MCF 10A (cell line): ENCODE measurements at regions of chr1 and their contacts with region 1.

Region 1: DNA sequence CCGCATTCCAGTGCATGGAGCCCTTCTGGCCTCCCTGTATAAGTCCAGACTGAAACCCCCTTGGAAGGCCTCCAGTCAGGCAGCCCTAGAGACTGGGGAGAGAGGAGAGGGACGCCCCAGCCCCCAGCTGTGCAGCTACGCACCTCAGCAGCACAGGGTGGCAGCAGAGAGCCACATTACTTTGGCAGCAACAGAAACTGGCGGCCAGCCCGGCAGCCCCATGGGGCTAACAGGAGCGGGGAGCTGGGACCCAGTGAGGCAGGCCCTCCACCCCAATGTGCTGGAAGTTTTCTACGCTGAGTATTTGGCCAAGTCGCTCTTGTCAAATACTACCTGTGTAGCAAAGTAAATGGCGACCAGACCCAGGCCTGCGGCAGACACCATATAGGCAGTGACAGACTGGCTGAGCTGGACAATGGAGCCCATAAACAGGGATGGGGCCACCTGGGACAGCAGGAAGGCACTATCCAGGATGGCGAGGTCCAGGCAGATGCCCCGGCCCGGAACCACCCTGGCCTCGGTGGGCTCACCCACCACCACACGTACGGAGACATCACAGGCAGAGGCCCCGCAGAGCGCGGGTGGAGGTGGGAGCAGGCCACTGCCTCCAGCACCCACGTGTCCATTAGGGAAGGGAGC is 21.2 kb downstream of the SLC45A3 start:
- DNase-seq: peak; percentile 90
- H3K4me3 Mint-ChIP-seq: no peak overlapping the region
- H3K27ac Mint-ChIP-seq: no peak overlapping the region
- H3K4me1 Mint-ChIP-seq: peaks cover 1% of the 10 kb centered on the region
- H3K27me3 Mint-ChIP-seq: no peaks in the 10 kb centered on the region
- CTCF ChIP-seq: peak; percentile 99

Region 2: GRCh38 chr1:205396967-205397616 is 262.0 kb before region 1 on chr1:
- CTCF ChIA-PET with region 1: interaction called, 13 read pairs
- POLR2A ChIA-PET with region 1: interaction called, 3 read pairs
- intact Hi-C with region 1: loop called (anchors 5 kb)
- DNase-seq: peak; percentile 87
- H3K4me3 Mint-ChIP-seq: no peak overlapping the region
- H3K27ac Mint-ChIP-seq: no peak overlapping the region
- H3K4me1 Mint-ChIP-seq: peaks cover 4% of the 10 kb centered on the region
- H3K27me3 Mint-ChIP-seq: peaks cover 27% of the 10 kb centered on the region
- CTCF ChIP-seq: peak; percentile 99

Region 3: DNA sequence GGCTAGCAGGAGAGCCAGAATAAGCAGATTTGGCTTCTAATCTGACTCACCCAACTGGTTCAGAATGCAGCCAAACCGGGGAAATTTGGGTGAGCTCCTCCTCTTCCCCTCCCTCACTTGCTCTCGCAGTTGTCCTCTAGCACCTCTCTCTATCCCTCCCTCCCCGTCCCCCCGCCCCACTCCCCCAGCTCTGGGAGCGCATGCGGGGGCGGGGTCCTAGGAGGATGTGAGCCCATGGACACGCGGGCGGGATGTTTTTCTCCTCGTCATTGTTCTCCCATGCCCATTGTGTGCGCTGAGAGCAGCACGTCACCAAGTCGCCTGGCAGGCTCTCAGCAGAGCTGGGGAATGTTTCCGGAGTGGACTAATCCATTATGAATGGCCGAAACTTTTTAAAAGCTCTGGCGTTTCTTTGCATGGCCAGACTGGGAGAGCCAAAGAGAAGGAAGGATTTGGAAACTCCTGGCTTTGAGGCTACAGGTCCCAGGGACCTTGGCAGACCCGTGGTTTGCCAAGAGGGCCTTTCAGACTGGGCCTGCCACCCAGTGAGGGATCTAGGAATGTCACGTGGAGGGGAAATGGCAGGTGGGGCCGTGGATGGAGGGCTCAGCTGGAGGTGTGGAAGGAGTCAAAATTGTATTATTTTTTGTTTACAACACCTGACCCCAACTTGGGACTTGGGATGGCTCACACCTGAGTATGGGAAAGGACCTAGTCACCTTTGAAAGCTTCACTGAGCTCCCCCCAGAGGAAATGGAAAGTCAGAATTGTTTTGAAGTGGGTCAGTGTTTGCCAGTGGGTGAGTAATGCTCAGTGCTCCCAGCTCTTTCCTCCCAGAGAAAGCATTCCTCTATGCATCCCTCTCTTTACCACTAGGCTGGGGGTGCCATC is 115.4 kb before region 1 on chr1:
- CTCF ChIA-PET with region 1: interaction called, 443 read pairs
- POLR2A ChIA-PET with region 1: interaction called, 8 read pairs
- intact Hi-C with region 1: no loop called
- DNase-seq: peak; percentile 99
- H3K4me3 Mint-ChIP-seq: peak overlapping the region; percentile 66
- H3K27ac Mint-ChIP-seq: peak overlapping the region; percentile 58
- H3K4me1 Mint-ChIP-seq: peaks cover 9% of the 10 kb centered on the region
- H3K27me3 Mint-ChIP-seq: peaks cover 7% of the 10 kb centered on the region
- CTCF ChIP-seq: no peak

Region 4: GRCh38 chr1:205610036-205610435 is 49.0 kb before region 1 on chr1:
- CTCF ChIA-PET with region 1: interaction called, 33 read pairs
- POLR2A ChIA-PET with region 1: interaction called, 4 read pairs
- intact Hi-C with region 1: no loop called
- DNase-seq: no peak
- H3K4me3 Mint-ChIP-seq: no peak overlapping the region
- H3K27ac Mint-ChIP-seq: peak overlapping the region; percentile 65
- H3K4me1 Mint-ChIP-seq: peaks cover 23% of the 10 kb centered on the region
- H3K27me3 Mint-ChIP-seq: no peaks in the 10 kb centered on the region
- CTCF ChIP-seq: no peak

Region 5: DNA sequence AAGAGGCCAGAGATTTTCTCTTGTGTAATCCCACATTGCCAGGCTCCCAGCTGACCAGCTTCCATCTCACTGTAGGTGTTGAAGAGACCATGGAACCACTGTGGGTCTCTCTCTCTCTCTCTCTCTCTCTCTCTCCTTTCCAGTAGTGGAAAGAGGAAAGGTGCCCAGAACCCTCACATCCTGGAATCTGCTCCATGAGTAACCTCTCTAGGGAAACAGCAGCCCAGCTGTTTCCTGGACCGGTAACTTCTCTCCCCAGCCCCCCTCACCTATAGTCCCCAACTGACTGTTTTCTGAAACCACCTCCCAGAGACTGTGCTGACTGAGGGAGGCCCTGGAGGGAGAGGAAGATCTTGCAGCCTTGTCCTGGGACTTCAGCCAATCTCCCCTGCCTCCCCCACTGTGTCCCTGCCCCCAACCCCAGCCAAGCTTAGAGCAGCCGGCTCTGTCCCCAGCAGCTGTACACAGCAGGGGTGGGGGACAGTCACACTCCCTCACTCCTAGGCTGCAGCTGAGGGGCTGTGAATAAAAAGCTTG is 41.9 kb after region 1 on chr1:
- CTCF ChIA-PET with region 1: interaction called, 61 read pairs
- POLR2A ChIA-PET with region 1: interaction called, 3 read pairs
- intact Hi-C with region 1: no loop called
- DNase-seq: peak; percentile 33
- H3K4me3 Mint-ChIP-seq: no peak overlapping the region
- H3K27ac Mint-ChIP-seq: no peak overlapping the region
- H3K4me1 Mint-ChIP-seq: peaks cover 6% of the 10 kb centered on the region
- H3K27me3 Mint-ChIP-seq: no peaks in the 10 kb centered on the region
- CTCF ChIP-seq: no peak

Region 6: DNA sequence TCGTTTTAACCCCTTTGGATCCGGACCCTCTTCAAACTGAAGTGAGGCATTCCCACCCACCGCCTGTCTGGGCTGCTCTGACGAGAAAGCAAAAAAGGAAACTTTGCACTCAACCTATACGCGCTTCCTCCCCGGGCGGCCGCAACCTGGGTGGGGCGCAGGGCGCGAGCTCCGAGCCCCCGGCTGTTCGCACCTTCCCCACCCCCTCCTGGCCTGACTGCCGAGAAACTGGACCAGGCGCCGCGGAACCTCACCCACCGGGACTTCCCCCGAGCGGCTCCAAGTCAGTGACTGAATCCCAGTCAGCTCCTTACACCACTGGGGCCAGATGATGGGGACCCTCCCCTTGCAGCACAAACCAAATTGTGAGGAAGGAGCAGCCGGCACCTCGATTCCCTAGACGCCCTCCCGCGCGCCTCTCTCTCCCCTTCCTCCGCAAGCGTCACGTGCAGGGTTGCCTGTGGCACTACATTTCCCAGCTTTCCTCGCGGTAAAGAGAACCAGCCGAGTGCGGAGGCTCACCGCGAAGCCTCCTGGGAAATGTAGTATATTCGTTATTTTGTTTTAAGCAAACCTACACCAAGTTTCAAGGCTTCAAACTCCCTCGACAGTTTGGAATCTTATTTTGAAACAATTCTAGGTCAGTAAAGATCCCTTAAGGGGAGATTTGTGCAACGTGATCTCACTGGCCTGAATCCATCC is 116.1 kb after region 1 on chr1 and contains the start of gene RAB29:
- CTCF ChIA-PET with region 1: interaction called, 4 read pairs
- POLR2A ChIA-PET with region 1: no interaction called
- intact Hi-C with region 1: loop called (anchors 10 kb)
- DNase-seq: peak; percentile 95
- H3K4me3 Mint-ChIP-seq: peak within 1 kb of the TSS; percentile 88
- H3K27ac Mint-ChIP-seq: peak within 1 kb of the TSS; percentile 89
- H3K4me1 Mint-ChIP-seq: peaks cover 31% of the 10 kb centered on the region
- H3K27me3 Mint-ChIP-seq: no peaks in the 10 kb centered on the region
- CTCF ChIP-seq: no peak
- total RNA-seq, gene RAB29: 33.6 and 44.8 TPM in 2 replicates

Region 7: GRCh38 chr1:205878026-205878425 is 219.0 kb after region 1 on chr1:
- CTCF ChIA-PET with region 1: no interaction called
- POLR2A ChIA-PET with region 1: no interaction called
- intact Hi-C with region 1: no loop called
- DNase-seq: no peak
- H3K4me3 Mint-ChIP-seq: no peak overlapping the region
- H3K27ac Mint-ChIP-seq: no peak overlapping the region
- H3K4me1 Mint-ChIP-seq: no peaks in the 10 kb centered on the region
- H3K27me3 Mint-ChIP-seq: peaks cover 27% of the 10 kb centered on the region
- CTCF ChIP-seq: no peak

Region 8: DNA sequence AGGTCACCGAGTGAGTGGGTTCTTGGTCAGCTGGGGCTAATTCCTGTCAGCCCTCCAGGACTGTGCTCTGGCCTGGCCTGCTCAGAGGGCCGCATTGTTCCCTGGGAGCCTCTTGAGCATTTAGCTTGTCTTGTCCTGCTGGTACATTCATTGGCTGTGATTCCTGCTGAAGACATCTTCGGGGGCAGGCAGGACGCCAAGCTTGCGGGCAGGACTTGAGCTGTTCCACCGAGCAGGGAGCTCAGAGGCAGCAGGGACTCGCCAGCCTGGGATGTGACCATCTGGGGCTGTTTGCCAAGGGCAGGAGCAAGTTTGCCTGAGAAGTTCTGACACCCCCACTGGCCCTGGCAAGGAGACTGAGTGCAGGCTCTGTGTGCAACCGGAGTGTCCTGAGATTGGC is 291.2 kb after region 1 on chr1:
- CTCF ChIA-PET with region 1: interaction called, 12 read pairs
- POLR2A ChIA-PET with region 1: interaction called, 3 read pairs
- intact Hi-C with region 1: no loop called
- DNase-seq: peak; percentile 98
- H3K4me3 Mint-ChIP-seq: peak overlapping the region; percentile 7
- H3K27ac Mint-ChIP-seq: peak overlapping the region; percentile 1
- H3K4me1 Mint-ChIP-seq: peaks cover 69% of the 10 kb centered on the region
- H3K27me3 Mint-ChIP-seq: peaks cover 68% of the 10 kb centered on the region
- CTCF ChIP-seq: no peak